ENCODE measurements at regions of chr2 and their contacts with region 1.

Region 1: GRCh38 chr2:85648619-85649018 is 19.4 kb downstream of the SFTPB start:
- DNase-seq: peak; percentile 44

Region 2: DNA sequence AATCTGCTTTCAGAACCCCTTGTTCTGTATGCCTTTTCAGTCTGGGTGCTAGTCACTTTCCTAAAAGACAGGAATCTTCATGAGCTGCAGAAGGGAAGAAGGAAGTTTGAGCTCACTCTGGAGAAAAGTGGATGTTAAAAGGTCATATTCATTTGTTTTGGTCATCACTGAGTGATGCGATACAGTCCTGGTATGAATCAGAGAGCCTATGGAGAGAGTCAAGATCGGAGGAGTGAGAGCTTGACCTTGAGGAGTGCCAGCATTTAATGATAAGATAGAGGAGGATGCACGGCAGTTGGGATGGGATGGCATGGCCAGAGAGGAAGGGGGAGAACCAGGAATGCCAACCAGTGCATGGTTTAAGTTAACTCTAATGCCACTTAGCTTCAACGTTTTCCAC is 13.0 kb before region 1 on chr2:
- CTCF ChIA-PET with region 1: interaction called, 40 read pairs
- POLR2A ChIA-PET with region 1: interaction called, 3 read pairs
- DNase-seq: no peak

Region 3: GRCh38 chr2:85728883-85729824 is 80.5 kb after region 1 on chr2:
- CTCF ChIA-PET with region 1: no interaction called
- POLR2A ChIA-PET with region 1: no interaction called
- DNase-seq: peak; percentile 93